K562 (cell line): ENCODE measurements at regions of chr11 and their contacts with region 1.

Region 1: GRCh38 chr11:76919887-76920746 is 59.4 kb downstream of the ACER3 start:
- DNase-seq: peak; percentile 61 to 87 (median 64)
- ATAC-seq: peak; percentile 85
- H3K4me3 ChIP-seq: no peak overlapping the region
- H3K27ac ChIP-seq: no peak overlapping the region
- H3K4me1 ChIP-seq: peaks cover 9 to 19% of the 10 kb centered on the region in 2 experiments; a peak in 4 of 5 replicates
- H3K27me3 ChIP-seq: no peaks in the 10 kb centered on the region
- CTCF ChIP-seq: peak; percentile 90 to 94 (median 93)
- EP300 ChIP-seq: no peak
- POLR2A ChIP-seq: no peak
- RAD21 ChIP-seq: peak; percentile 73 to 76

Region 2: DNA sequence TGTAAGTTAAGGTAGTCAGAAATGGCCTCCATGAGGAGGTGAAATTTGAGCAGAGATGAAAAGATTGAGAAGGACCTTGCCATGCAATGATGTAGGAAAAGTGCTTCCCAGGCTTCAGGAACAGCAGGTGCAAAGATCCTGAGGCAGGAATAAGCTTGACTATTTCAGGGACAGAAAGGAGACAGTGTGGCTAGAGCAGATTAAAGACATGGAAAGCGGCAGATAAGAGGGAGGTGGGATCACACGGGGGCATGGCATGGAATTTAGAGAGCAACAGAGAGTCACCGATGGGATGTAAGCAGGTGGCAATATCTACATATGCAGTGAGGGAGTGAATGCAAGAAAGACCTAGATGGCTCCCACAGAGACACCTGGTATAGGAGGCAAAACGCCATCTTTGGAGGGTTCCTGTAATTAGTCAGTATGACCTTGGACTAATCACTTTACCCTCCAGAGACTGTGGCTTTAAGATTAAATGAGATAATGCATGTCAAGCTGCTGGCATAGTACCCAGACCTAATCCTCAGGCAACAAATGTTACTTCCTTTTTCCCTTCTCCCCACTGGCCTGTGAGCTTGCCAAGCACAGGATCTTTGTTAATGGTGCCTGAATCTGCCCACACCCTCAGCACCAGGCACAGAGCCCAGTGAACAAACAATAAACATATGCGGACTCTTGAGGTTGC is 84.0 kb before region 1 on chr11:
- CTCF ChIA-PET with region 1: interaction called, 9 read pairs
- POLR2A ChIA-PET with region 1: no interaction called
- in situ Hi-C with region 1: no loop called
- intact Hi-C with region 1: loop called (anchors 1 kb)
- DNase-seq: no peak
- ATAC-seq: no peak
- H3K4me3 ChIP-seq: no peak overlapping the region
- H3K27ac ChIP-seq: no peak overlapping the region
- H3K4me1 ChIP-seq: peaks cover 24 to 28% of the 10 kb centered on the region in 2 experiments; a peak in 3 of 5 replicates
- H3K27me3 ChIP-seq: no peaks in the 10 kb centered on the region
- CTCF ChIP-seq: no peak
- EP300 ChIP-seq: no peak
- POLR2A ChIP-seq: no peak
- RAD21 ChIP-seq: no peak

Region 3: GRCh38 chr11:77039491-77040400 is 119.6 kb after region 1 on chr11:
- CTCF ChIA-PET with region 1: interaction called, 36 read pairs
- POLR2A ChIA-PET with region 1: interaction called, 3 read pairs
- in situ Hi-C with region 1: loop called (anchors 10 kb)
- intact Hi-C with region 1: no loop called
- DNase-seq: no peak
- ATAC-seq: no peak
- H3K4me3 ChIP-seq: no peak overlapping the region
- H3K27ac ChIP-seq: no peak overlapping the region
- H3K4me1 ChIP-seq: peaks cover 0 to 7% of the 10 kb centered on the region in 2 experiments; a peak in 3 of 5 replicates
- H3K27me3 ChIP-seq: no peaks in the 10 kb centered on the region; a peak in 1 of 5 replicates
- CTCF ChIP-seq: no peak
- EP300 ChIP-seq: no peak
- POLR2A ChIP-seq: no peak
- RAD21 ChIP-seq: no peak

Region 4: GRCh38 chr11:77101052-77101537 is 181.0 kb after region 1 on chr11:
- CTCF ChIA-PET with region 1: no interaction called
- POLR2A ChIA-PET with region 1: no interaction called
- in situ Hi-C with region 1: loop called (anchors 5 kb)
- intact Hi-C with region 1: no loop called
- DNase-seq: peak; percentile 60 to 72 (median 70)
- ATAC-seq: peak; percentile 84
- H3K4me3 ChIP-seq: no peak overlapping the region
- H3K27ac ChIP-seq: no peak overlapping the region
- H3K4me1 ChIP-seq: peaks cover 0 to 15% of the 10 kb centered on the region in 2 experiments; a peak in 1 of 5 replicates
- H3K27me3 ChIP-seq: peaks cover 8 to 58% of the 10 kb centered on the region in 2 experiments; a peak in 4 of 5 replicates
- CTCF ChIP-seq: peak; percentile 72 to 77 (median 73)
- EP300 ChIP-seq: no peak
- POLR2A ChIP-seq: no peak
- RAD21 ChIP-seq: peak; percentile 23 to 53; a peak in 3 of 4 replicates

Region 5: GRCh38 chr11:77267962-77268361 is 347.8 kb after region 1 on chr11:
- CTCF ChIA-PET with region 1: no interaction called
- POLR2A ChIA-PET with region 1: no interaction called
- in situ Hi-C with region 1: no loop called
- intact Hi-C with region 1: no loop called
- DNase-seq: no peak
- ATAC-seq: no peak
- H3K4me3 ChIP-seq: no peak overlapping the region
- H3K27ac ChIP-seq: no peak overlapping the region
- H3K4me1 ChIP-seq: no peaks in the 10 kb centered on the region
- H3K27me3 ChIP-seq: no peaks in the 10 kb centered on the region
- CTCF ChIP-seq: no peak
- EP300 ChIP-seq: no peak
- POLR2A ChIP-seq: no peak
- RAD21 ChIP-seq: no peak